Calu3 (cell line): ENCODE measurements at regions of chr20 and their contacts with region 1.

Region 1: GRCh38 chr20:45987108-45987780 is 15.2 kb upstream of the ZNF335 start:
- DNase-seq: peak; percentile 96
- H3K4me3 Mint-ChIP-seq: no peak overlapping the region
- H3K27ac Mint-ChIP-seq: no peak overlapping the region
- H3K4me1 Mint-ChIP-seq: peaks cover 10% of the 10 kb centered on the region
- H3K27me3 Mint-ChIP-seq: peaks cover 19% of the 10 kb centered on the region
- CTCF ChIP-seq: peak; percentile 97

Region 2: DNA sequence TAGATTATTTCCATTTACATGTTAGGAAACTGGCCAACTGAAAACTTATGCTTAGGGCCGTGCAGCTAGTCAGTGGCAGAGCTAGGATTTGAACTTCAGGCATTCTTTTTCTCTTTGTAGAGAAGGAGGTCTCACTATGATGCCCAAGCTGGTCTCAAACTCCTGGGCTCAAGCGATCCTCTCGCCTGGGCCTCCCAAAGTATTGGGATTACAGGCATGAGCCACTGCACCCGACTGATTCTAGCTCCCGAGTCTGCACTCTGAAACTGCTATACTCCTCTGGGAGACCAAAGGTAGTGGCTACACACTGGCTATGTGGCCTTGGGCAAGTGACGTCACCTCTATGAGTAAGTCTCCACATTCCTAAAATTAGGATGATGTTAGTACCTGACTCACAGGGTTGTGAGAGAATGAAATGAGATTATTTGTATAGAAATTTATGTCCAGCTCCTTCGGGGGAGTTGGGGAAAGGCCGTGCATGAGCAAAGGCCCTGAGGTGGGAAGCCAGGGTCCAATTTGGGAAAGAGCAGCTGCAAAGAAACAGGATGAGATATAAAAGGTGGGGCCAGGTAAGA is 81.7 kb before region 1 on chr20:
- CTCF ChIA-PET with region 1: no interaction called
- intact Hi-C with region 1: no loop called
- DNase-seq: peak; percentile 39
- H3K4me3 Mint-ChIP-seq: no peak overlapping the region
- H3K27ac Mint-ChIP-seq: no peak overlapping the region
- H3K4me1 Mint-ChIP-seq: peaks cover 9% of the 10 kb centered on the region
- H3K27me3 Mint-ChIP-seq: peaks cover 7% of the 10 kb centered on the region
- CTCF ChIP-seq: no peak

Region 3: GRCh38 chr20:45971675-45972499 is 15.4 kb before region 1 on chr20 and contains the start of gene ZNF335:
- CTCF ChIA-PET with region 1: interaction called, 17 read pairs
- intact Hi-C with region 1: no loop called
- DNase-seq: peak; percentile 99
- H3K4me3 Mint-ChIP-seq: peak within 1 kb of the TSS; percentile 81
- H3K27ac Mint-ChIP-seq: peak within 1 kb of the TSS; percentile 80
- H3K4me1 Mint-ChIP-seq: peaks cover 24% of the 10 kb centered on the region
- H3K27me3 Mint-ChIP-seq: peaks cover 15% of the 10 kb centered on the region
- CTCF ChIP-seq: peak; percentile 35
- total RNA-seq, gene ZNF335: 26.4 and 31.9 TPM in 2 replicates

Region 4: DNA sequence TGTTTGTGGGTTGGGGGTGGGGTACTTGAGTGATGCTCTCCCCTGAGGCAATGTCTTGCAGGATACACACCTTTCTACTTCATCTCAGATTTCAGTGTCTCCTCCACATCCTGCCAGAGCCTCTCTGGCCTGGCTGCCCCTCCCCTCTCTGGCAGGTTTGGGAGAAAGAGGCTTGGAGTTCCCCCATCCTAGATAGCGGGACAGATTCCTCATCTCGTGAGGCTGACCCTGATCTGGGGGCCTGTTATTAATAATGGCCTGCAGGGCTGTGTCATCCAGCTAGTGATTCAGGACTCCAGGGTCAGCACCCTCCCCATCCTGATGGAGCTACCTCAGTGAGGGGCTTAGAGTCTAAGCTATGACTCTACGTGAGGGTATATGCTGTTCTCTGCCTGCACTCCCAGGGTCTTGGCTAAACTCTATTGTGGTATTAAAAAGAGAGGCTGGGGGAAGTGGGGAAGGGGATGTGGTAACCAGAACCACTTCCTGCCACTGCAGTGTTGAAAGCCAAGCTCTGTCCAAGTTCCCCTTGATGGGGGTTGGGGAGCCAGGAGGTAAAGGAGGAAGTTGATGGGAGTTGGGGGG is 17.7 kb after region 1 on chr20:
- CTCF ChIA-PET with region 1: interaction called, 10 read pairs
- intact Hi-C with region 1: no loop called
- DNase-seq: no peak
- H3K4me3 Mint-ChIP-seq: no peak overlapping the region
- H3K27ac Mint-ChIP-seq: no peak overlapping the region
- H3K4me1 Mint-ChIP-seq: peaks cover under 1% of the 10 kb centered on the region
- H3K27me3 Mint-ChIP-seq: peaks cover 80% of the 10 kb centered on the region
- CTCF ChIP-seq: no peak

Region 5: DNA sequence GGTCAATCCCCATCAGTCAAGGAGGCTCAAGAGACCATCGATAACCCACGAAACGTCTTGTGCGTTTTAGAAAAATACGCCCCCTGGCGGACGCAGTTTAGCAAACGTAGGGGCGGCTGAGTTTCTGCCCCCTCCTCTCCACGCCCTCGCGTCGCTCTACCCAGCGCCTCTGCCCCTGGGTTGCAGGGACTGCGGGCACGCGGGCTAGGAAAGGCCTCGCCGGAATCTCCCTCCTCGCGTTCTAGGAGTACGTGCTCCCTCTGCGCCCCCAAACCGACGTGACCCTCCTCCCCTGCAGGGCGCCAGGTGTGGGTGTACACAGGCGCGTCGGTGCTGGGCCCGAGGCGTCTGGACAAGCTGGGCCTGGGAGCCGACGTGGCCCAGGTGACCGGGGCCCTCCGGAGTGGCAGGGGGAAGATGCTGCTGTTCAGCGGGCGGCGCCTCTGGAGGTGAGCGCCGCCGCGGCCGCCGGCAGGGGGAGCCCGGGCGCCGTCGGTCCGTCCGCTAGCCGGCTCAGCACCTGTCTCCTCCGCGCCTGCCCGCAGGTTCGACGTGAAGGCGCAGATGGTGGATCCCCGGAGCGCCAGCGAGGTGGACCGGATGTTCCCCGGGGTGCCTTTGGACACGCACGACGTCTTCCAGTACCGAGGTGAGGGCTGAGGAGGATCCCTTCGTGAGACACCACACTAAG is 26.7 kb after region 1 on chr20:
- CTCF ChIA-PET with region 1: interaction called, 26 read pairs
- intact Hi-C with region 1: loop called (anchors 2 kb)
- DNase-seq: peak; percentile 87
- H3K4me3 Mint-ChIP-seq: peak overlapping the region; percentile 55
- H3K27ac Mint-ChIP-seq: no peak overlapping the region
- H3K4me1 Mint-ChIP-seq: peaks cover 31% of the 10 kb centered on the region
- H3K27me3 Mint-ChIP-seq: peaks cover 89% of the 10 kb centered on the region
- CTCF ChIP-seq: peak; percentile 92

Region 6: DNA sequence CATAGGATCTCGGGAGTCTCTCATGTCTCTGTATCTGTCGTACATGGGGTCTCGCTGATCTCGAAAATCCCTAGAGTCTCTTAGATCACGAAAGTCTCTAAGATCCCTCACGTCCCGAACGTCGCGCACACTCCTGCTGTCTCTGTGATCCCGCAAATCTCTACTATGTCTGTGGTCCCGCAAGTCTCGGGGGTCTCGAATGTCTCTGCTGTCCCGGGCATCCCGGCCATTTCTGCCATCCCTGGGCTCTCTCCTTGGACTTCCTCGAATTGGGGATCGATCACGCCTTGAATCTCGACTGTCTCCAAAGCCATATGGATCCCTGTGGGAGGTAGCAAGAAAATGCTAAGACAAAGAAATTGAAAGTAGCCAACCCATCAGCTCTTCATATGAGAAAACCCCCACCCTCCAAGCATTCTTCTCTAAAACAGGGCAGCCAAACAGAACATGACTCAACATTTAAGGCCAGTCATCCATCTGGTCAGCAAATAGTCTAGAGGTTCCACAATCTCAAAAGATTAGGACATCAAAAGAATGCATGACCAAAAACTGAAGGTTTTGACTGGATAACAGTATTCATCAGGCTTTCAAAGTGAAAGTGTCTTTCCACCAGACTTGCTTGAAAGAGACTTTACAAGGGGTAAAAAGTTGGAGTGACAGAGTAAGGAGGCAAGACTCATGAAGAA is 83.1 kb after region 1 on chr20:
- CTCF ChIA-PET with region 1: no interaction called
- intact Hi-C with region 1: no loop called
- DNase-seq: no peak
- H3K4me3 Mint-ChIP-seq: no peak overlapping the region
- H3K27ac Mint-ChIP-seq: no peak overlapping the region
- H3K4me1 Mint-ChIP-seq: no peaks in the 10 kb centered on the region
- H3K27me3 Mint-ChIP-seq: no peaks in the 10 kb centered on the region
- CTCF ChIP-seq: no peak

Region 7: GRCh38 chr20:46089417-46090388 is 102.5 kb after region 1 on chr20 and contains the start of gene NCOA5:
- CTCF ChIA-PET with region 1: interaction called, 5 read pairs
- intact Hi-C with region 1: loop called (anchors 5 kb)
- DNase-seq: peak; percentile 99
- H3K4me3 Mint-ChIP-seq: peak within 1 kb of the TSS; percentile 68
- H3K27ac Mint-ChIP-seq: peak within 1 kb of the TSS; percentile 45
- H3K4me1 Mint-ChIP-seq: peaks cover 35% of the 10 kb centered on the region
- H3K27me3 Mint-ChIP-seq: no peaks in the 10 kb centered on the region
- CTCF ChIP-seq: peak; percentile 12
- total RNA-seq, gene NCOA5: 31.7 and 34.4 TPM in 2 replicates

Region 8: DNA sequence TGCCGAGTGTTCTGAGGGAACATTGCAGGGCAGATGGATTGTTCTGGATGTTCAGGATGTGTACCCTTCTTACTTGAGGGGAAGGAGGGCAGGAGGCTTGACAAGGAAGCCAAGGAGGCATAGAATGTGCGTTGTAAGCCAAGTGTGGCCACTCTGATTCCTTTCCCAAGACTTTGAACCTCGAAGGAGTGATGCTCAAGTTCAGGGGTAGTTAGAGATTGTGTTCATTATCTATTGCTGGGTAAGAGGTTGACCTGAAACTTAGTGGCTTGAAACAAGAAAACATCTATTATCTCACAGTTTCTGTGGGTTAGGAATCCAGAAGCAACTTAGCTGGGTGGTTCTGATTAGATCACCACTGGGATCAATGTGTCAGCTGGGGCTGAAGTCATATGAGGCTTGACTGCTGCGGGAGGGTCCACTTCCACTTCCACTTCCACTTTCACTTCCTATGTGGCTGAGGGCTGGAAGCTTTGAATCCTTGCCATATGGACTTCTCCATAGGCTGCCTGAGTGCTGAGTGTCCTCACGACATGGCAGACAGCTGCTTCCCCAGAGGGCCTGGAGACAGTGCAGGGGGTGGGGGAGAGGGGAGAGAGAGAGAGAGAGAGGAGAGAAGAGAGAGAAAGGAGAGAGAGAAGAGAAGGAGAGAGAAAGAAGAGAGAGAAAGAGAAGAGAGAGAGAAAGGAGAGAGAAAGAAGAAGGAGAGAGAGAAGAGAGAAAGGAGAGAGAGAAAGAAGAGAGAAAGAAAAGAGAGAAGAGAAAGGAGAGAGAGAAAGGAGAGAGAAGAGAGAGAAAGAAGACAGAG is 124.0 kb after region 1 on chr20:
- CTCF ChIA-PET with region 1: no interaction called
- intact Hi-C with region 1: no loop called
- DNase-seq: no peak
- H3K4me3 Mint-ChIP-seq: no peak overlapping the region
- H3K27ac Mint-ChIP-seq: no peak overlapping the region
- H3K4me1 Mint-ChIP-seq: peaks cover 6% of the 10 kb centered on the region
- H3K27me3 Mint-ChIP-seq: peaks cover 98% of the 10 kb centered on the region
- CTCF ChIP-seq: no peak